Heart left ventricle (tissue), 16 donors: ENCODE measurements at regions of chr20 and their contacts with region 1.

Region 1: DNA sequence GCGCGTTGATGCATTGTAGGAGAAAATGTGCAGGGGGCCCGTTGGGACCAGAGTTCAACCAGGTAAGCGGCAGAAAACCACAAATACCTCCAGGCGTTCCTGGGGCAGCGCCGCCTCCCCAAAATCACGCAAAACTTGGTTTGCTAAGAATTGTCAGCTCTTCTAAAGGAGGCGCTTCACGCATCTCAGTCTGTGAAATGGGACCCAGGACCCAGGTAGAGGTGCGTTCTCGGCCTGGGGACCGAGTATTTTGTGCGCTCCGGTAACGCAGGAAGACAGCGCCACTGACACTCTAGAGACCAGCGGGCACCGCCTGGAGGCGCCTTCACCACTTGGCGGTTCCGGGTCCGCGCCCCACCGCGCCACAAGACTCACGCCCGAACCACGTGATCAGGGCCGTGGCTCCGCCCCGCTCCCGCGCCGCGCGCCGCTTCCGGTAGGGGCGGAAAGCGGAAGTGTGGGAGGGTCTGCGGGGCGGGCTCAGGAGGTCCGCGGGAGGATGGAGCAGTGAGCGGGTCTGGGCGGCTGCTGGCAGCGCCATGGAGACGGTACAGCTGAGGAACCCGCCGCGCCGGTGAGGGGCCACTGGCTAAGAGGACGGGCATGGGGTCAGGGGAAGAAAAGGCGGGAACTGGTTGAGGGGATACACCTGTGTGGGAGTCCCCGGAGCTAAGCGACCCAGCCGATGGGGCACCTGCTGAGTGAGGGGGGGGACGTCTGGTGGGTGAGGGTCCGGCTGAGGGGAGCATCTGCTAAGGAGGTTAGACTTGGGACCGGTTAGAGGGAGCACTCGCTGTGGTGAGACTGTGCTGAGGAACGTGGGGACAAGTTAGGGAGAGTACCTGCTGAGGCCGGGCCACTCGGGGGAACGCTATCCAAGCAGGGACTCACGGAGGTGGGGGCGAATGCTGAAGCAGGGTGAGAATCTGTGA is at the start of gene STK4:
- DNase-seq: peak; percentile 94 to 97 (median 94)
- ATAC-seq: peak; percentile 94 to 99 (median 98)
- H3K4me3 ChIP-seq: peak within 1 kb of the TSS; percentile 62 to 93 (median 76)
- H3K27ac ChIP-seq: peak within 1 kb of the TSS in 11 of 12 donors; percentile 71 to 95 (median 85)
- H3K4me1 ChIP-seq: peaks cover 0 to 52% (median 15%) of the 10 kb centered on the region in 12 donors
- H3K27me3 ChIP-seq: no peaks in the 10 kb centered on the region
- CTCF ChIP-seq: peak; percentile 13 to 71 (median 46)
- POLR2A ChIP-seq: peak in 1 of 2 donors; percentile 88
- total RNA-seq, gene STK4: 8.1 to 25.3 (median 9.5) TPM

Region 2: DNA sequence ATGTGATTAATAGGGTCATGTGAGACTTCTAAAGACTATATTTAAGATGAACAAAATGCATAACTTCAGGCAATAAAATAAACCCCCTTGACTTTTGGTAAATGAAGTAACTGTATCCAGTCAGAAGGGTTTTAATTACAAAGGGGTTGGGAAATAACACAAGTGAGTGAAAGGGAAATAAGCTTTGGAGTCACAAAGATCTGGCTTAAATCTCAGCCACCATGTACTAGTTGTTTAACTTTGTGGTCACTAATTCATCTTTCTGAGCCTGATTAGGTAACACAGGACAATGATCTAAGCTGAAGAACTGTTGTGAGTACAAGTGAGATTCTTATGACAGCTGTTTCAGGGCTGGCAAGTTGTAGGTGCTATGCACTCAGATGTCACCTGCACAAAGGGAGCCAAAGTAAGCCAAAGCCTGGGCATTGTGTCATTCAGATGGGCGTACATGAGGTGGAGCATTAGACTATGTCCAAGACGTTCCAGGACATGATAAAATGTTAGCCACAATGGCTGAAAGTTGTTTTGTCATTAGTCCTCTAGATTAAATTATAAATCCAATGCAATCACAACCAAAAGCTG is 19.9 kb before region 1 on chr20:
- intact Hi-C with region 1: no loop called
- DNase-seq: no peak
- ATAC-seq: no peak
- H3K4me3 ChIP-seq: no peak overlapping the region
- H3K27ac ChIP-seq: no peak overlapping the region
- H3K4me1 ChIP-seq: peaks cover 0 to 5% (median 0%) of the 10 kb centered on the region in 12 donors
- H3K27me3 ChIP-seq: no peaks in the 10 kb centered on the region
- CTCF ChIP-seq: no peak
- POLR2A ChIP-seq: no peak

Region 3: GRCh38 chr20:45052698-45053429 is 86.6 kb after region 1 on chr20:
- intact Hi-C with region 1: no loop called
- DNase-seq: no peak
- ATAC-seq: no peak
- H3K4me3 ChIP-seq: no peak overlapping the region
- H3K27ac ChIP-seq: peak overlapping the region in 4 of 12 donors; percentile 0 to 57 (median 12)
- H3K4me1 ChIP-seq: peaks cover 0 to 50% (median 29%) of the 10 kb centered on the region in 12 donors
- H3K27me3 ChIP-seq: no peaks in the 10 kb centered on the region
- CTCF ChIP-seq: no peak
- POLR2A ChIP-seq: no peak

Region 4: GRCh38 chr20:45415774-45416637 is 449.7 kb after region 1 on chr20 and contains the start of gene PIGT:
- intact Hi-C with region 1: loop called in 1 of 10 experiments (anchors 10 kb)
- DNase-seq: peak; percentile 87 to 92 (median 88)
- ATAC-seq: peak; percentile 65 to 84 (median 77)
- H3K4me3 ChIP-seq: peak within 1 kb of the TSS; percentile 52 to 97 (median 82)
- H3K27ac ChIP-seq: peak within 1 kb of the TSS; percentile 55 to 90 (median 83)
- H3K4me1 ChIP-seq: peaks cover 0 to 62% (median 42%) of the 10 kb centered on the region in 12 donors
- H3K27me3 ChIP-seq: no peaks in the 10 kb centered on the region
- CTCF ChIP-seq: no peak
- POLR2A ChIP-seq: peak; percentile 52 to 92
- total RNA-seq, gene PIGT: 124 to 224 (median 165) TPM